ENCODE measurements at regions of chr12 and their contacts with region 1.

Region 1: DNA sequence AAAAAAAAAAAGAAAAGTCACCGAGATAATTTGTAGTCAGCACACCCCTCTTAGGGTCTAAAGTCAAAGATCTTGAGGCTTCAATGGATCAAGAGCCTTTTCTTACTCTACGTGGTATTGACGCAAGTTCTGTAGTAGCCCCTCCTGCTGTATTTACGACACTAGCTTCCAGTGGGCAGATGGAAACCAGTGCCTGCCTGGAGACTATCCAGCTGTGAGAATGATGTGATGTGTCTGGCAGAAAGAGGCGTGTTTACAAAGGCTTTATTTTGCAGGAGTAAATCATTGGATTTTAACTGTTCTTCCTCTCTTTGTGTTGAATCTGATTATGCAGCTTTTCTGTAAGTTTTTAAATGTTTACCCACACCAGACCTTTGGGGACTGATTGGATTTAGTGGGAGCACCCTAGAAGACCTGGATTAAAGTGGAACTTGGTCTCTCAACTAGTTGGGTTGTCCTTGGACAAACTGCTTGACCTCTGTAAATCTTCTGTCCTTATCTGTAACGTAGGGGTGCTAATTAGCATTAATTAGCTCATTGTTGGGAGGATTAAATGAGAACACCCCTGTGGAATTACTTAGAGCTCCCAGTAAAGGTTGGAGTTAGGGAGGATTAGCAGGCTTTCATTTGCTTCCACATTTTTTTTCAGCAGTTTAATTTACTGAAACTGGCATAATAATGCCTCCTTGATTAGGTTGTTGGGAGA is 72.4 kb downstream of the RASSF3 start:
- DNase-seq: no peak
- H3K4me3 Mint-ChIP-seq: no peak overlapping the region
- H3K27ac Mint-ChIP-seq: no peak overlapping the region
- H3K4me1 Mint-ChIP-seq: peaks cover 62% of the 10 kb centered on the region
- H3K27me3 Mint-ChIP-seq: no peaks in the 10 kb centered on the region

Region 2: DNA sequence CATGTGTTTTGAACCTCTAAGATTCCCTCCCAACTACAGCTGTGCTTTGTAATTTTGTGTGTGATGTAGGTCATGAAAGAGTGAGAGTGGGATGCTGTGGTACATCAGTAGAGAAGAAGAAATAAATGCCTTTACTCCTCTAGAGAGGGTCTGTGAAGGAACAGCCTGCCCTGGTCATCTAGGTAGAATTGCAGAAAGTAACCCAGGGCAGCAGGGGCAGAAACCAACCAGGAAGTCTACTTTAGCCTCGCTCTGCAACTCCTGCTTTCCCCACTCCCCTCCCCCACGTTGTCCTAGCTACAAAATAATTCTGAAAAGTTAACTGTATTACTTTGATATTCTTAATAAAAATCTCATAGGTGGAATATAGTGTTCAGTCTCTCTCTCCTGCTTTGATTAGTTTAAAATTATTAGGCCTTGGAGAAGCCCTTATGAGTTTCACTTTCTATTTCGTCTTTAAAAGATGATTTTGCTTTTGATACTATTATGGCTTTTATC is 223.3 kb before region 1 on chr12:
- intact Hi-C with region 1: loop called (anchors 5 kb)
- DNase-seq: no peak
- H3K4me3 Mint-ChIP-seq: peak overlapping the region; percentile 76
- H3K27ac Mint-ChIP-seq: peak overlapping the region; percentile 77
- H3K4me1 Mint-ChIP-seq: peaks cover 43% of the 10 kb centered on the region
- H3K27me3 Mint-ChIP-seq: no peaks in the 10 kb centered on the region

Region 3: GRCh38 chr12:64660237-64661018 is 22.3 kb before region 1 on chr12:
- intact Hi-C with region 1: loop called (anchors 2 kb)
- DNase-seq: no peak
- H3K4me3 Mint-ChIP-seq: no peak overlapping the region
- H3K27ac Mint-ChIP-seq: peak overlapping the region; percentile 31
- H3K4me1 Mint-ChIP-seq: peaks cover 48% of the 10 kb centered on the region
- H3K27me3 Mint-ChIP-seq: no peaks in the 10 kb centered on the region

Region 4: GRCh38 chr12:64669270-64669842 is 13.4 kb before region 1 on chr12:
- intact Hi-C with region 1: loop called (anchors 1 kb)
- DNase-seq: peak; percentile 43
- H3K4me3 Mint-ChIP-seq: peak overlapping the region; percentile 87
- H3K27ac Mint-ChIP-seq: peak overlapping the region; percentile 97
- H3K4me1 Mint-ChIP-seq: peaks cover 87% of the 10 kb centered on the region
- H3K27me3 Mint-ChIP-seq: no peaks in the 10 kb centered on the region

Measured in activated T-helper 2 cell treated with anti-CD3 and anti-CD28 coated beads, Interferon-gamma antibody, Interleukin-2, Interleukin-4, amounts not matched to agents 10 μg/mL and 5 μg/mL and 100 μg/mL, durations not matched to agents 14 hours and 24 hours and 36 hours (primary cell).